AG04449 (cell line): ENCODE measurements at regions of chr1 and their contacts with region 1.

Region 1: DNA sequence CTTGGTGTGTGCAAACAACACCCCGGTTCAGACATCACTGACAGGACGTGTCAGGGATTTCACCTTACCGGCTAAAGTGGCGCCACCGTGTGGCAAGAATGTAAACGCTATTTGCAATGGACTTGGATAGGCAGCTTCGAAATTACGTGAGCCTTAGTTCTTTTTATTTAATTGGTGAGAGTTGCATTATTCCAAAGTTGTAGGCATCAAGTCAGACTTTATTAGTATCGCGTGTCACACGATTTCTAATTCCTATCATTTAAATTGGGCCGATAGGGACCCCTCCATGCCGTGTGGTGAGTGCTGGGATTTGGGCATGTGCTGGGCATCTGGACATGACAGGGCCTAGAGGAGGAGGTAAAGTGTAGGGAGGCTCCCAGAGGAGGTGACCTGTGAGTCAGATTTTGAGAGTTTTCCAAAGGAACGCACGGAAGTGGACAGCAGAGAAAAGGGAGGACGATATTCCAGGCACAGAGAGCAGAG is 14.5 kb upstream of the CPT2 start:
- DNase-seq: no peak
- H3K4me3 ChIP-seq: no peak overlapping the region
- CTCF ChIP-seq: peak; percentile 65

Region 2: GRCh38 chr1:52920791-52921291 is 261.3 kb before region 1 on chr1:
- CTCF ChIA-PET with region 1: interaction called, 10 read pairs
- POLR2A ChIA-PET with region 1: no interaction called
- DNase-seq: no peak
- H3K4me3 ChIP-seq: peak overlapping the region; percentile 66
- CTCF ChIP-seq: no peak

Region 3: GRCh38 chr1:53196485-53197270 is 14.5 kb after region 1 on chr1 and contains the start of gene CPT2:
- CTCF ChIA-PET with region 1: interaction called, 95 read pairs
- POLR2A ChIA-PET with region 1: interaction called, 4 read pairs
- DNase-seq: peak; percentile 59
- H3K4me3 ChIP-seq: peak within 1 kb of the TSS; percentile 74
- CTCF ChIP-seq: peak; percentile 13

Region 4: GRCh38 chr1:53203466-53203865 is 21.3 kb after region 1 on chr1:
- CTCF ChIA-PET with region 1: interaction called, 11 read pairs
- POLR2A ChIA-PET with region 1: interaction called, 4 read pairs
- DNase-seq: no peak
- H3K4me3 ChIP-seq: no peak overlapping the region
- CTCF ChIP-seq: no peak